ENCODE measurements at regions of chr1 and their contacts with region 1.

Region 1: GRCh38 chr1:65687428-65688214 is 105.1 kb upstream of the PDE4B start:
- DNase-seq: peak; percentile 51 to 87 (median 75)
- ATAC-seq: peak; percentile 74
- H3K4me3 ChIP-seq: no peak overlapping the region
- H3K4me3 Mint-ChIP-seq: no peak overlapping the region
- H3K27ac ChIP-seq: no peak overlapping the region
- H3K27ac Mint-ChIP-seq: no peak overlapping the region
- H3K4me1 ChIP-seq: peaks cover 8% of the 10 kb centered on the region
- H3K4me1 Mint-ChIP-seq: peaks cover 4% of the 10 kb centered on the region
- H3K27me3 ChIP-seq: no peaks in the 10 kb centered on the region
- H3K27me3 Mint-ChIP-seq: peaks cover 19% of the 10 kb centered on the region
- CTCF ChIP-seq: peak; percentile 99

Region 2: GRCh38 chr1:64686828-64687724 is 1000.5 kb before region 1 on chr1:
- CTCF ChIA-PET with region 1: no interaction called
- POLR2A ChIA-PET with region 1: no interaction called
- intact Hi-C with region 1: loop called (anchors 5 kb)
- DNase-seq: peak in 5 of 9 experiments; percentile 5 to 65 (median 28)
- ATAC-seq: peak; percentile 79
- H3K4me3 ChIP-seq: no peak overlapping the region
- H3K4me3 Mint-ChIP-seq: no peak overlapping the region
- H3K27ac ChIP-seq: no peak overlapping the region
- H3K27ac Mint-ChIP-seq: no peak overlapping the region
- H3K4me1 ChIP-seq: no peaks in the 10 kb centered on the region
- H3K4me1 Mint-ChIP-seq: no peaks in the 10 kb centered on the region
- H3K27me3 ChIP-seq: no peaks in the 10 kb centered on the region
- H3K27me3 Mint-ChIP-seq: no peaks in the 10 kb centered on the region
- CTCF ChIP-seq: peak; percentile 86

Region 3: GRCh38 chr1:65059930-65060538 is 627.6 kb before region 1 on chr1:
- CTCF ChIA-PET with region 1: interaction called, 6 read pairs
- POLR2A ChIA-PET with region 1: interaction called, 4 read pairs
- intact Hi-C with region 1: loop called (anchors 1 to 5 kb)
- DNase-seq: peak in 2 of 9 experiments; percentile 47 to 60
- ATAC-seq: peak; percentile 46
- H3K4me3 ChIP-seq: no peak overlapping the region
- H3K4me3 Mint-ChIP-seq: no peak overlapping the region
- H3K27ac ChIP-seq: no peak overlapping the region
- H3K27ac Mint-ChIP-seq: no peak overlapping the region
- H3K4me1 ChIP-seq: peaks cover 29% of the 10 kb centered on the region
- H3K4me1 Mint-ChIP-seq: peaks cover 60% of the 10 kb centered on the region
- H3K27me3 ChIP-seq: no peaks in the 10 kb centered on the region
- H3K27me3 Mint-ChIP-seq: no peaks in the 10 kb centered on the region
- CTCF ChIP-seq: peak; percentile 64

Region 4: GRCh38 chr1:65235867-65236805 is 451.5 kb before region 1 on chr1:
- CTCF ChIA-PET with region 1: interaction called, 18 read pairs
- POLR2A ChIA-PET with region 1: no interaction called
- intact Hi-C with region 1: loop called (anchors 1 kb)
- DNase-seq: peak in 2 of 9 experiments; percentile 53 to 56
- ATAC-seq: no peak
- H3K4me3 ChIP-seq: no peak overlapping the region
- H3K4me3 Mint-ChIP-seq: no peak overlapping the region
- H3K27ac ChIP-seq: no peak overlapping the region
- H3K27ac Mint-ChIP-seq: no peak overlapping the region
- H3K4me1 ChIP-seq: no peaks in the 10 kb centered on the region
- H3K4me1 Mint-ChIP-seq: no peaks in the 10 kb centered on the region
- H3K27me3 ChIP-seq: no peaks in the 10 kb centered on the region
- H3K27me3 Mint-ChIP-seq: peaks cover 21% of the 10 kb centered on the region
- CTCF ChIP-seq: peak; percentile 33

Region 5: GRCh38 chr1:65564493-65564892 is 123.1 kb before region 1 on chr1:
- CTCF ChIA-PET with region 1: no interaction called
- POLR2A ChIA-PET with region 1: no interaction called
- intact Hi-C with region 1: no loop called
- DNase-seq: no peak
- ATAC-seq: no peak
- H3K4me3 ChIP-seq: no peak overlapping the region
- H3K4me3 Mint-ChIP-seq: no peak overlapping the region
- H3K27ac ChIP-seq: no peak overlapping the region
- H3K27ac Mint-ChIP-seq: no peak overlapping the region
- H3K4me1 ChIP-seq: no peaks in the 10 kb centered on the region
- H3K4me1 Mint-ChIP-seq: no peaks in the 10 kb centered on the region
- H3K27me3 ChIP-seq: no peaks in the 10 kb centered on the region
- H3K27me3 Mint-ChIP-seq: no peaks in the 10 kb centered on the region
- CTCF ChIP-seq: no peak

Region 6: DNA sequence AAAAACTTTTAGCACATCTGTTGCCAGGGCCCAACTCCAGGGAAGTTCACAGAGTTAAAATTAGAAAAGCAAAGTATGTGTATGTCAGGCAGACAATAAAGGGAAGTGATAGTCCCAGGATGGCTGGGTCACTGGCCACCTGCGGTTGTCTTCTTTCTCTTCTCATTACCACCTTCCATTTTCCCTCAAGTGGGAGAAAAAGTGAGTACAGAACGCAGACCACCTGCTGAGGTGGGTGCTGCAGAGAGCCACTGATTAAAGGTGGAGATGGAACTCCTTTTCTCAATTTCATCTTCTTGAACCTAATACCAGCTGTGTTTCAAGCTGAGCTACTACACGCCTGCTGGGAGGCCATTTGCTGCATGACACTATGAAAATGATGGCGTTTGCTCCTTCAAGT is 16.2 kb after region 1 on chr1:
- CTCF ChIA-PET with region 1: interaction called, 10 read pairs
- POLR2A ChIA-PET with region 1: no interaction called
- intact Hi-C with region 1: no loop called
- DNase-seq: no peak
- ATAC-seq: no peak
- H3K4me3 ChIP-seq: no peak overlapping the region
- H3K4me3 Mint-ChIP-seq: no peak overlapping the region
- H3K27ac ChIP-seq: no peak overlapping the region
- H3K27ac Mint-ChIP-seq: no peak overlapping the region
- H3K4me1 ChIP-seq: no peaks in the 10 kb centered on the region
- H3K4me1 Mint-ChIP-seq: no peaks in the 10 kb centered on the region
- H3K27me3 ChIP-seq: no peaks in the 10 kb centered on the region
- H3K27me3 Mint-ChIP-seq: peaks cover 22% of the 10 kb centered on the region
- CTCF ChIP-seq: no peak